ENCODE measurements at regions of chr3 and their contacts with region 1.

Region 1: DNA sequence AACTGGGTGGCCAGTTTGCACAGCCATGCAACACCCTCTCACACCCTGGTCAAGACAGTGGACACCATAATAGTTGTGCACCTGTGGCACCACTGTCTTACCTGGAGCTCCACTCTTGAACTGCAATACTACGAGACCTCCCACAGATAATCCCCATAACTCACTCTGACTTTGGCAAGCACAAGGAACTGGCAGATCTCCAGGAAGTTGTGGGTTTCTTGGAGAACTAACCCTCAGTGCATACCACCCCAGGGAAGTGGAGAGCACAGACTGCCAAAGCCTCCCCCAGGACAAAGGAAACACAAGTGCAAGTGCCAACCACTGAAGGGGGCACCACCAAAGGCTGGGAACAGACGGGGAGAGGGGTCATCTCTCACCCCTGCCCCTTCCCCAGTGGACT is 318.6 kb downstream of the SUCLG2 start:
- DNase-seq: no peak

Region 2: GRCh38 chr3:67278015-67278618 is 57.7 kb before region 1 on chr3:
- intact Hi-C with region 1: loop called (anchors 2 kb)
- DNase-seq: no peak

Region 3: DNA sequence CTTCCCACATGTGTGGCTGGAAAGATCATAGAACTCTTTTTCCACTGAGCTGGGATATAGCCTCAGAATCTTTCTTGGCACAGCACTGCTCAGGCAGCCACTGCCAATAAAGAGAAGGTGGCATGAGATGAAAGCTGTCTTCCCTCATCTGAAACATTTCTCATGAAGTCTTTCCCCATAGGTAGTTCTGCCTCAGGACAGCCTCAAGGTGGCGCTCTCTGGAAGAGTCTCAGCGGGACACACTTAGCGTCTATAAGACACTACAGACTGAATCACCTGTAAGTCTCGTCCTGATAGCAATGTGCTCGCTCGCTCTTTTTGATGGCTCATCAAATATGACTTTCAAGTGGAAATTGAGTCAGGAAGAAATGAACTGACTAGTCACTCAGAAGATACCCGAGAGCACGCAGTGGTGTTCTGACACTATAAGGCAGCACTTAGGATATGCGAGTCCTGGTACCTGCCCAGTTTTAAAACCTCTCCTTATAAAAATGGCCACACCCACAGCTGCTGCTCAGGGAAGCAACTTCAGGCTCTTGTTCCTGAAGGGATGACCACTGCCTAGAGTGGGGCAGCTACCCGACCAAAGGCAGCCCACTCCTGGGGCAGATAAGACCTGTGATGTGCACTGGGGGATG is 49.1 kb after region 1 on chr3:
- intact Hi-C with region 1: no loop called
- DNase-seq: peak; percentile 15 to 90 (median 51)